Breast epithelium (tissue), 4 donors: ENCODE measurements at regions of chr16 and their contacts with region 1.

Region 1: DNA sequence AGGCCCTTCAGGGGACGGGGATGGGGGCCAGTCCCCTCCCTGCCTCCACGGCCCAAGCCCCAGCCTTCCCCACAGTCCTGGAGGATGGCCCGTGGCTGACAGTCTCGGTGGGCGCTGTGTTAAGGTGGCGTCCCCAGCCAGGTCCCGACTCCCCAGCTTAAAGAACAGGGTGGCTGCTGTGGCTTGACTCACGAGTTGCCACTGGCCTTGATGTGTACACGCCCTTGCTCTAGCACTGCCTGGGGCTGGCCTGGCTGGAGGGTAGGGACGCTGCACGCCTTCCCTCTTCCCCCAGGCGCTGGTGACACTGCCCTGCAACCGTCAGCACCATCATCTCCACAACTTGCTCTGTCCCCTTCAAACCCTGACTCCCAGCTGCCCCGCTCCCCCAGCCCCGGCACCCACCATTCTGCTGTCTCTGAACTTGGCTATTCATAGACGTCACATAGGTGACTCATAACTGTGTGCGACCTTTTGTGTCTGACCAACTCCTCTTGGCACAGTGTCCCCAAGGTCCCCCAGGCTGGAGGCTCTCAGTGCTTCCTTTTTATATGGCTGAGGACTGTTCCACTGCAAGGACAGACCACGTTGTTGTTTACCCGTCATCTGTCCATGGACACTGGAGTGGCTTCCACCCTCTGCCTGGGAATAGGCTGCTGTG is 6.3 kb downstream of the GNPTG start:
- DNase-seq: no peak
- H3K4me3 ChIP-seq: no peak overlapping the region
- H3K27ac ChIP-seq: no peak overlapping the region
- H3K4me1 ChIP-seq: no peaks in the 10 kb centered on the region
- H3K27me3 ChIP-seq: no peaks in the 10 kb centered on the region
- CTCF ChIP-seq: no peak
- POLR2A ChIP-seq: no peak

Region 2: GRCh38 chr16:825341-826061 is 532.5 kb before region 1 on chr16:
- intact Hi-C with region 1: no loop called
- DNase-seq: no peak
- H3K4me3 ChIP-seq: peak overlapping the region in 1 of 3 donors; percentile 43
- H3K27ac ChIP-seq: no peak overlapping the region
- H3K4me1 ChIP-seq: peaks cover 4 to 7% of the 10 kb centered on the region in 2 donors
- H3K27me3 ChIP-seq: peaks cover 0 to 49% of the 10 kb centered on the region in 2 donors
- CTCF ChIP-seq: no peak
- POLR2A ChIP-seq: no peak

Region 3: GRCh38 chr16:1194665-1195392 is 163.2 kb before region 1 on chr16:
- intact Hi-C with region 1: no loop called
- DNase-seq: no peak
- H3K4me3 ChIP-seq: no peak overlapping the region
- H3K27ac ChIP-seq: no peak overlapping the region
- H3K4me1 ChIP-seq: no peaks in the 10 kb centered on the region
- H3K27me3 ChIP-seq: peaks cover 4 to 68% of the 10 kb centered on the region in 2 donors
- CTCF ChIP-seq: peak in 2 of 3 donors; percentile 61 to 64
- POLR2A ChIP-seq: no peak

Region 4: GRCh38 chr16:1379304-1380076 is 21.5 kb after region 1 on chr16:
- intact Hi-C with region 1: loop called (anchors 2 kb)
- DNase-seq: no peak
- H3K4me3 ChIP-seq: peak overlapping the region; percentile 48 to 75 (median 49)
- H3K27ac ChIP-seq: peak overlapping the region; percentile 54 to 77
- H3K4me1 ChIP-seq: peaks cover 0 to 6% of the 10 kb centered on the region in 2 donors
- H3K27me3 ChIP-seq: no peaks in the 10 kb centered on the region
- CTCF ChIP-seq: no peak
- POLR2A ChIP-seq: no peak

Region 5: GRCh38 chr16:1390239-1390779 is 32.3 kb after region 1 on chr16:
- intact Hi-C with region 1: no loop called
- DNase-seq: no peak
- H3K4me3 ChIP-seq: no peak overlapping the region
- H3K27ac ChIP-seq: no peak overlapping the region
- H3K4me1 ChIP-seq: no peaks in the 10 kb centered on the region
- H3K27me3 ChIP-seq: no peaks in the 10 kb centered on the region
- CTCF ChIP-seq: no peak
- POLR2A ChIP-seq: no peak